ENCODE measurements at regions of chr13 and their contacts with region 1.

Region 1: DNA sequence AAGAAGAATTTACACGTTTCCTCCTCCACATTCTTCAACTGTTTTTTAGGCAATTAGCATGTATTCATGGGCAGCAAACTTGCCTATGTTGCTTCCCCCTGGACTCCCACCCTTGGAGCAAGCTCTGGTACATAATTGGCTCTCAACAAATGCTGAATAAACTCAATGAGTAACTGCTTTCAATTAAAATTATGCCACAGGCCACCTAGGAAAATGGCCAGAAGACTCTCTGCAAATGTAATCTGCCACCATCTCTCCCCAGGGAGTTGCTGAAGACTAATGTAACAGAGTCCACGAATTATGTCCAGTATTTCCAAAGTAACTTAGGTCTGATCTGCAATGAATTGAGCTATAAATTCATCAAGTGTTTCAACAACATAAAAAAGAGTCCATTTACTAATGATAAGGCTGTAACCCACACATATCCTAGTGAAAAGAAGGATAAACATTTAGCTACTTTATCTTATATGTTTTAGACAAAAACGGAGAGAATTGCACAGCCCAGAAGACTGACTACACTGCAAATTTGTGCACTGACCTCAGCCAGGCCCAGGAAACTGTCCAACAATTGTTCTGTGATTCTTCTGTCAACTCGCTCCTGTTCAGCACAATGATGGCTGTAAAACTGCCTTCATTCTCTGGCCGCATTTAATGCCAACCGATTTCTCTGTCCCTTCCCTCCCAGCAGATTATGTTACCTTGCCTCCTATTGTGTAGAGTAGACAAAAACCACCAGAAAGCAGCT is 808.6 kb upstream of the ARGLU1 start:
- DNase-seq: no peak
- CTCF ChIP-seq: no peak

Region 2: GRCh38 chr13:107387525-107387924 is 11.0 kb after region 1 on chr13:
- CTCF ChIA-PET with region 1: interaction called, 12 read pairs
- POLR2A ChIA-PET with region 1: no interaction called
- DNase-seq: no peak
- CTCF ChIP-seq: no peak

Measured in GM10248 (cell line).